CD14-positive monocyte (primary cell): ENCODE measurements at regions of chr16 and their contacts with region 1.

Region 1: GRCh38 chr16:71461686-71462648 is at the start of gene ZNF23:
- DNase-seq: peak; percentile 74 to 80 (median 75)
- H3K4me3 ChIP-seq: peak within 1 kb of the TSS; percentile 83 to 89 (median 83)
- H3K4me3 Mint-ChIP-seq: peak within 1 kb of the TSS; percentile 87 to 95
- H3K27ac ChIP-seq: peak within 1 kb of the TSS; percentile 59 to 86
- H3K27ac Mint-ChIP-seq: peak within 1 kb of the TSS; percentile 80 to 89 (median 86)
- H3K4me1 ChIP-seq: peaks cover 13 to 15% of the 10 kb centered on the region in 2 donors
- H3K4me1 Mint-ChIP-seq: peaks cover 20% of the 10 kb centered on the region
- H3K27me3 ChIP-seq: no peaks in the 10 kb centered on the region
- H3K27me3 Mint-ChIP-seq: peaks cover 0 to 4% (median 0%) of the 10 kb centered on the region in 3 donors
- CTCF ChIP-seq: no peak
- polyA plus RNA-seq, gene ZNF23: 2.1 to 3.9 (median 2.8) TPM

Region 2: DNA sequence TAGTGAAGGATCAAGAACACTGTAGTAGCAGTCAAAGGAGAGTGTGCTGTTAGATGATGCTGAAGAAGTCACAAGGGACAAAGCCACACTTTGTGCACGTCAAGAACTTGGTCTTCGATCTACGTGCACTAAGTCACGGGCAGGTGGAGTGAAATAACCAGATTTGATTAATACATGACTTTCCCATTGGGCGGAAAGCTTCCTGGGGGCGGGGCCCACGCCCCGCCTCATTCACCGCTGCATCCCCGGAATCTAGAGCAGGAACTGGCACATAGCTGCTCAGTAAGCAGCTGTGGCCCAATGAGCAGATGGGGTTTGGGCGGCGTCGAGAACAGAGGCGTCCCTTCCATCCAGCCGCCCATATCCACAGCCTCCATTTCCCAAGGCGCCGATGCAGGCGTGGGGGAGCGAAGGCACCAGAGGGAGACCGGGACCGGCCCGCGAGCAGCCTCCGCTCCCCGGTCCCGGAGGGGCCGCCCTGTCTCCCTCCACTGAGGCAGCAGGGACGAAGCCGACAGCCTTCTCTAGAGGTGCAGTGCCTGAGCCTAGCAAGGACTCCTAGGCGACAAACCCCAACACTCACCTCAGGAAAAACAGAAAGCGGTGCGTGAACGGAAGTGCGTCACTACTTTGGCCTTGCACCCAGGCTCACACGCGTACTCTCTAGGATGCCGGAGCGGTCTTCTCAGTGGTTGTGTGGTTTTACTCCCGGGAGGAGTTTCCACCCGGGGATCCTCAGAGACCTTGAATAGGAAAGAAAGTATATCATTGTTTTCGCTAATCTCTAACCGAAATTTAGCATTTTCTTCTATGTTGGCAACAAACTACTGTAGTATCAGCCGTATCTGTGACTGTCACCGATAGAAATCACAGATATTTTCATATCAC is 22.3 kb after region 1 on chr16:
- intact Hi-C with region 1: loop called in 1 of 2 experiments (anchors 2 kb)
- DNase-seq: peak; percentile 75 to 88 (median 76)
- H3K4me3 ChIP-seq: peak overlapping the region; percentile 50 to 93 (median 84)
- H3K4me3 Mint-ChIP-seq: peak overlapping the region; percentile 82 to 90
- H3K27ac ChIP-seq: peak overlapping the region; percentile 94 to 95
- H3K27ac Mint-ChIP-seq: peak overlapping the region; percentile 83 to 92 (median 89)
- H3K4me1 ChIP-seq: peaks cover 10 to 20% of the 10 kb centered on the region in 2 donors
- H3K4me1 Mint-ChIP-seq: peaks cover 17% of the 10 kb centered on the region
- H3K27me3 ChIP-seq: no peaks in the 10 kb centered on the region
- H3K27me3 Mint-ChIP-seq: peaks cover 1 to 5% (median 3%) of the 10 kb centered on the region in 3 donors
- CTCF ChIP-seq: no peak

Region 3: DNA sequence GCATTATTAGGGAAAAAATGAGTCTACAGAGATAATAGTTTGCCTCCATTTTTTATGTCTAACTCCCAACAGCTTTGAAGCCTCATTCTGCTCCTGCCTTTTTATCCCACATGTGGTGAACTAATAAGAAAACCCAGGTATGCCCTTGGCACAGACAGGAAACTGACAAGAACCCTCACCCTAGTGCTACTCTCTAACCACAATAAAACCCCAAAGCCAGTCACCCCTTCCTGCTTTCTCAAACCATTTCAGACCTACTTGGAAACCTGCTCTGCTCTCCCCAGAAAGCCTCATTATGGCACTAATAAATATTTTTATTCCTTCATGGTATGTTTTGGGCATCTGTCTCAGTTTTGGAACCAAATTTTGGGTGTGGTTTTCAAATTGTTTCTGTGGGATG is 160.1 kb after region 1 on chr16:
- intact Hi-C with region 1: no loop called
- DNase-seq: no peak
- H3K4me3 ChIP-seq: no peak overlapping the region
- H3K4me3 Mint-ChIP-seq: no peak overlapping the region
- H3K27ac ChIP-seq: no peak overlapping the region
- H3K27ac Mint-ChIP-seq: no peak overlapping the region
- H3K4me1 ChIP-seq: peaks cover 0 to 8% of the 10 kb centered on the region in 2 donors
- H3K4me1 Mint-ChIP-seq: no peaks in the 10 kb centered on the region
- H3K27me3 ChIP-seq: peaks cover 33 to 34% of the 10 kb centered on the region in 2 donors
- H3K27me3 Mint-ChIP-seq: peaks cover 15 to 29% (median 29%) of the 10 kb centered on the region in 3 donors
- CTCF ChIP-seq: no peak